CD14-positive monocyte (primary cell): ENCODE measurements at regions of chr17 and their contacts with region 1.

Region 1: DNA sequence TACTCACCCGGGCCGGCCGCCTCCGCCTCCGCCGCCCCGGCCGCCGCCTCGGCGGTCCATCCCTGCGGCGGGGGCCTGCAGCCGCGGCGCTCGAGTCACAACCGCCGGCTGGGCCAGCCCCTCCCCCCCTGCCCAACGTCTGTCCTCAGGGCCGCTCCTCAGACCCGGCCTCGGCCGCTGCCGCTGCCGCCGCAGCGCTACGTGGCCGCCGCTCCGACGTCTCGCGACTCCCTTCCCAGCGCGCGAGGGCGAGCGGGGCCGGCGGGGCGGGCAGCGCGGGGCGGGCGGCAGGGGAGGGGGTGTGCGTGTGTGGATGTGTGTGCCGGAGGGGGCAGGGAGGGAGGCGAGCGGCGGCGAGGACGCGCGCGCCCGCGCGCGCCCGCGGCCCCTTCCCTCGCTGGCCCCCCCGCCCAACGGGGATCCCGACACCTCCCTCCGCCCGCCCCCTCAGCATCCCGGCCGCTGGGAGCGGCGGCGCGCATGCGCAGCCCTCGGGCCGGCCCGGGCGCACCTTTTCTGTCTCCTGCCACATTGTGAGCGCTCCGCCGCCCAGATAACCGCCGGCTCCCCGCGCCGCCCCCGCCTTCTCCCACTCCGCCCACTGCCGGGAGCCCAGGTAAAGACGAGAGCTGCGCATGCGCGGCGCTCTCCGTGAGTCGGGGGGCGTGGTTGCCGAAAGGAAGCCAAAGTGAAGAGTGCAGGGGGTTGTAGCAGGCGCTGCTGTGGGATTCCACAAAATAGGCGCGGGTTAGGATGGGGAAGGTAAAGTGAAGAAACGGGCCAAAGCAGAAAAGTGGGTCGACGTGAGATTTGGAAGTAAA is at the start of gene ZNF652:
- DNase-seq: peak; percentile 69 to 81 (median 73)
- H3K4me3 ChIP-seq: peak within 1 kb of the TSS; percentile 94 to 98 (median 97)
- H3K4me3 Mint-ChIP-seq: peak within 1 kb of the TSS; percentile 90 to 99
- H3K27ac ChIP-seq: peak within 1 kb of the TSS; percentile 75 to 89
- H3K27ac Mint-ChIP-seq: peak within 1 kb of the TSS; percentile 88 to 96 (median 95)
- H3K4me1 ChIP-seq: peaks cover 36 to 42% of the 10 kb centered on the region in 2 donors
- H3K4me1 Mint-ChIP-seq: peaks cover 45% of the 10 kb centered on the region
- H3K27me3 ChIP-seq: no peaks in the 10 kb centered on the region
- H3K27me3 Mint-ChIP-seq: peaks cover 0 to 2% (median 0%) of the 10 kb centered on the region in 3 donors
- CTCF ChIP-seq: no peak
- polyA plus RNA-seq, gene ZNF652: 16.9 to 19.8 (median 18.8) TPM

Region 2: GRCh38 chr17:49315551-49316257 is 46.4 kb before region 1 on chr17:
- intact Hi-C with region 1: loop called in 1 of 2 experiments (anchors 5 kb)
- DNase-seq: peak; percentile 58 to 79 (median 78)
- H3K4me3 ChIP-seq: peak overlapping the region in 2 of 3 experiments; percentile 20 to 59
- H3K4me3 Mint-ChIP-seq: peak overlapping the region; percentile 56 to 84
- H3K27ac ChIP-seq: peak overlapping the region in 1 of 2 donors; percentile 76
- H3K27ac Mint-ChIP-seq: peak overlapping the region in 4 of 7 donors; percentile 20 to 77 (median 74)
- H3K4me1 ChIP-seq: peaks cover 28 to 32% of the 10 kb centered on the region in 2 donors
- H3K4me1 Mint-ChIP-seq: peaks cover 30% of the 10 kb centered on the region
- H3K27me3 ChIP-seq: no peaks in the 10 kb centered on the region
- H3K27me3 Mint-ChIP-seq: no peaks in the 10 kb centered on the region
- CTCF ChIP-seq: peak; percentile 86

Region 3: DNA sequence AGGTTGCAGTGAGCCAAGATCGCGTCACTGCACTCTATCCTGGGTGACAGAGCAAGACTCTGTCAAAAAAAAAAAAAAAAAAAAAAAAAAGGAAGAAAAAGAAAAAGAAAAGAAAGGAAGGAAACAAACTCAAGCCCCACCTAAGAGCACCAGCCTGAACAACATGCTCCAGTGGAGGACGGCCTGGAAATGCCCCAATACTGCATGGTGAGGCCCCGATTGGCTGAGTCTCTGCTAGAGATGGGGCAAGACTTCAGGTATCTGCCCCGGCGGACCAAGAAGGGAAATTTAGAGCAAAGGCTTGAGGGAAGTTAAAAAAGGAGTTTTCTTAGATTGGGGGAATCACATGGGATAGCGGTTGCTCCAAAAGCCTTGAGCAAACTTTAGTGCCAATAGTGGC is 10.3 kb after region 1 on chr17:
- intact Hi-C with region 1: no loop called
- DNase-seq: no peak
- H3K4me3 ChIP-seq: no peak overlapping the region
- H3K4me3 Mint-ChIP-seq: no peak overlapping the region
- H3K27ac ChIP-seq: no peak overlapping the region
- H3K27ac Mint-ChIP-seq: peak overlapping the region in 2 of 7 donors; percentile 59 to 76
- H3K4me1 ChIP-seq: peaks cover 29 to 43% of the 10 kb centered on the region in 2 donors
- H3K4me1 Mint-ChIP-seq: peaks cover 36% of the 10 kb centered on the region
- H3K27me3 ChIP-seq: no peaks in the 10 kb centered on the region
- H3K27me3 Mint-ChIP-seq: no peaks in the 10 kb centered on the region
- CTCF ChIP-seq: no peak

Region 4: GRCh38 chr17:49399995-49400394 is 37.9 kb after region 1 on chr17:
- intact Hi-C with region 1: loop called in 1 of 2 experiments (anchors 5 kb)
- DNase-seq: no peak
- H3K4me3 ChIP-seq: no peak overlapping the region
- H3K4me3 Mint-ChIP-seq: no peak overlapping the region
- H3K27ac ChIP-seq: no peak overlapping the region
- H3K27ac Mint-ChIP-seq: no peak overlapping the region
- H3K4me1 ChIP-seq: peaks cover 3 to 15% of the 10 kb centered on the region in 2 donors
- H3K4me1 Mint-ChIP-seq: peaks cover 28% of the 10 kb centered on the region
- H3K27me3 ChIP-seq: no peaks in the 10 kb centered on the region
- H3K27me3 Mint-ChIP-seq: peaks cover 0 to 2% (median 1%) of the 10 kb centered on the region in 3 donors
- CTCF ChIP-seq: no peak

Region 5: GRCh38 chr17:49496183-49496866 is 134.2 kb after region 1 on chr17:
- intact Hi-C with region 1: no loop called
- DNase-seq: peak; percentile 47 to 67 (median 60)
- H3K4me3 ChIP-seq: peak overlapping the region in 1 of 3 experiments; percentile 74
- H3K4me3 Mint-ChIP-seq: peak overlapping the region; percentile 72 to 80
- H3K27ac ChIP-seq: no peak overlapping the region
- H3K27ac Mint-ChIP-seq: no peak overlapping the region
- H3K4me1 ChIP-seq: peaks cover 23 to 33% of the 10 kb centered on the region in 2 donors
- H3K4me1 Mint-ChIP-seq: peaks cover 25% of the 10 kb centered on the region
- H3K27me3 ChIP-seq: peaks cover 58 to 78% of the 10 kb centered on the region in 2 donors
- H3K27me3 Mint-ChIP-seq: peaks cover 75 to 88% (median 81%) of the 10 kb centered on the region in 3 donors
- CTCF ChIP-seq: peak; percentile 94